Right lobe of liver (tissue), 6 donors: ENCODE measurements at regions of chr1 and their contacts with region 1.

Region 1: DNA sequence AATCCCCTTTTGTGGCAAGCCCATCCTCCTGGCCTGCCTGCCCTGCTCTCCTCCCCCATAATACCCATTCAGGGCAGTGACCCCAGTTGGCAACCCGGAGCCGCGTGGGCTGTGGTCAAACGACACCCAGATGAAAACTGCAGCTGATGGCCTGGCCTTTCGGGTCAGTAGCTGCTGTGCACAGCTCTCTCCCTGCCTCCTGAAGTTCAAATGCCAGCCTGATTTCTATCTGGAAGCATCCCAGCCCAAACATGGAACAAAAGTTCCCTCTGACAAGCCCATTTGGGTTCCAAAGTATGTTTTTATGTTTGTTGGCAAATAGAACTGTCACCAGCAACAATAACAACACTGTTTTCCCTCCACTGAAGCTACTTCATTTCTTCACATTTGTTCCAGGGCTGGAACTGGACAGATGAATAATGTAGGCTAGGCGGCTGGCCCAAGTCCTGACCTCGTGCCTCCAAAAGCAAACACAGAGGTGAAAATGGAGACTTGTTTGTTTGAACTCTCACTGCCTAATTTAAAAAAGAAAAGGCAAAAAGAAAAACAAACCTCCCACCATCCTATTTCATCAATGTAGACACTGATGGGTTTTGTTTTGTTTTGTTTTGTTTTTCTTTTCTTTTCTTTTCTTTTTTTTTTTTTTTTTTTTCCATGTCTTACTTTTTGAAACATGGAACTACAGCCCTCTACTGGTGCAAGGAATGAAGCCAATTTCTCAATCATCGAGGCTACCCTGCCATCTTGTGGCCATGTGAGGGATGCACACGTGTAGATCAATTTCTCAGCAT is 179.0 kb downstream of the ADSS2 start:
- DNase-seq: peak; percentile 57 to 75 (median 72)
- ATAC-seq: peak; percentile 89 to 91 (median 90)
- H3K4me3 ChIP-seq: no peak overlapping the region
- H3K27ac ChIP-seq: peak overlapping the region; percentile 54 to 56 (median 55)
- H3K4me1 ChIP-seq: peaks cover 0 to 26% (median 11%) of the 10 kb centered on the region in 4 donors
- H3K27me3 ChIP-seq: no peaks in the 10 kb centered on the region
- CTCF ChIP-seq: peak; percentile 93 to 98 (median 95)
- POLR2A ChIP-seq: no peak

Region 2: GRCh38 chr1:243335292-243335691 is 937.4 kb before region 1 on chr1:
- intact Hi-C with region 1: loop called in 1 of 2 experiments (anchors 10 kb)
- DNase-seq: no peak
- ATAC-seq: no peak
- H3K4me3 ChIP-seq: no peak overlapping the region
- H3K27ac ChIP-seq: no peak overlapping the region
- H3K4me1 ChIP-seq: no peaks in the 10 kb centered on the region
- H3K27me3 ChIP-seq: no peaks in the 10 kb centered on the region
- CTCF ChIP-seq: no peak
- POLR2A ChIP-seq: no peak

Region 3: GRCh38 chr1:243708210-243708609 is 564.5 kb before region 1 on chr1:
- intact Hi-C with region 1: loop called in 1 of 2 experiments (anchors 10 kb)
- DNase-seq: no peak
- ATAC-seq: peak; percentile 50 to 62 (median 52)
- H3K4me3 ChIP-seq: no peak overlapping the region
- H3K27ac ChIP-seq: no peak overlapping the region
- H3K4me1 ChIP-seq: peaks cover 0 to 21% (median 0%) of the 10 kb centered on the region in 4 donors
- H3K27me3 ChIP-seq: no peaks in the 10 kb centered on the region
- CTCF ChIP-seq: peak; percentile 36 to 60 (median 52)
- POLR2A ChIP-seq: no peak

Region 4: DNA sequence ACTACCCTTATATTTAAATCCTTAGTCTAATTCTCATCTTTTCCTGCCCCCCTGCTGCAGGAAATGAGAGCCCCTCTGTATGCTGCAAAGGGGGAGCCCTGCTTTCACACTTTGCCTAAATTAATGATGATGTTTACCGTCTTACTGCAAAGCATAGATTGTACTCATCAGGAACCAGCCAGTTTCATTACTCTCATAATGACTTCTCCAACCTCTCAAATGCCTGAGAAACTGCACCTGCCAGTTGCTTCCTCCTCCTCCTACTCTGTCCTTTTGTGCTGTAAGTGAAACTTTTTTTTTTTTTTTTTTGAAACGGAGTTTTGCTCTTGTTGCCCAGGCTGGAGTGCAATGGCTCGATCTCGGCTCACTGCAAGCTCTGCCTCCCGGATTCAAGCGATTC is 77.4 kb after region 1 on chr1:
- intact Hi-C with region 1: no loop called
- DNase-seq: no peak
- ATAC-seq: peak in 3 of 4 donors; percentile 20 to 33 (median 21)
- H3K4me3 ChIP-seq: no peak overlapping the region
- H3K27ac ChIP-seq: no peak overlapping the region
- H3K4me1 ChIP-seq: no peaks in the 10 kb centered on the region
- H3K27me3 ChIP-seq: no peaks in the 10 kb centered on the region
- CTCF ChIP-seq: no peak
- POLR2A ChIP-seq: no peak